ENCODE measurements at regions of chr1 and their contacts with region 1.

Region 1: DNA sequence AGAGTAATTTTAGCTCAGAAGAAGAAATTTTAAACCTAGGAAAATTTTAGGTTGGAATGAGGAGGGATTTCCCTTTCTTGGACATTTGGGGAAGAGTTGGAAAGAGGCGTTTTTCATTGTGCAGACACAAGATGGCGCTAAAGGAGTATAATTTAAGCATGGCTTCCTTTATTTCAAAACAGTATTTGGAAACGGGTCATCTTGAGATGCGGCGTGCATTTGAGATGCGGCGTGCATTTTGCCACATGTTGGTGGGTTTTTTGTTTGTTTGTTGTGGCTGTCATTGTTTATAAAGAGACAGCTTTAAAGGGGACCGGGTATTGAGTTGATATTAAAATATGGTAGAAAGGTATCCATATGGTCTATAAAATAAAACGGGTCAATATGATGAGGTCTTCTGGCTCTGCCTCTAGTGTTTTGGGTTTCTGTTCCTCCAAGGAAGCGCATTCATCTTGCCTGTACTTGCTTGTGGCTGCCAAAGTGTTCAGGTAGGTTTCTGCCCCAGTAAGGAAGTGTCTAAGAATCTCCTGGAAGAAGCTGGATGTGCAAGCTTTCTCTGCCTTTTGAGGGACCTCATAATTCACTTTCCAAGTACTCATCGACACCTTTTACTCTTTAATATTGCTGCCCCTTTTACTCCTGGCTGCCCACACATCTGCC is 210.3 kb downstream of the SLC35F3 start:
- DNase-seq: peak in 1 of 2 experiments; percentile 45
- H3K4me3 ChIP-seq: no peak overlapping the region
- H3K4me3 Mint-ChIP-seq: no peak overlapping the region
- H3K27ac Mint-ChIP-seq: no peak overlapping the region
- H3K4me1 ChIP-seq: no peaks in the 10 kb centered on the region
- H3K4me1 Mint-ChIP-seq: no peaks in the 10 kb centered on the region
- H3K27me3 ChIP-seq: no peaks in the 10 kb centered on the region; the same call in none of the 2 replicates
- H3K27me3 Mint-ChIP-seq: peaks cover 12% of the 10 kb centered on the region
- CTCF ChIP-seq: peak; percentile 60 to 66

Region 2: DNA sequence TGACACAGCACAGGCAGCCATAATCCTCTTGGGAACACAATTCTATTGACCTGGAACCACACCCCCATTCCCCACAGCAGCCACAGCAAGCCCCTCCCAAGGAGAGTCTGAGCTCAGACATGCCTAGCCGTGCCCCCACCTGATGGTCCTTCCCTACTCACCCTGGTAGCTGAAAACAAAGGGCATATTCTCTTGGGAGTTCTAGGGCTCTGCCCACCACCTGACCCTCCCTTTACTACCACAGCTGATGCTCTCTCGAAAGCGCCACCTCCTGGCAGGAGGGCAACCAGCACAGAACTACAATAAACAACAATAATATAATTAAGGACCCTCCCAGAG is 73.6 kb after region 1 on chr1:
- CTCF ChIA-PET with region 1: no interaction called
- POLR2A ChIA-PET with region 1: no interaction called
- intact Hi-C with region 1: loop called (anchors 1 kb)
- DNase-seq: no peak
- H3K4me3 ChIP-seq: no peak overlapping the region
- H3K4me3 Mint-ChIP-seq: no peak overlapping the region
- H3K27ac Mint-ChIP-seq: no peak overlapping the region
- H3K4me1 ChIP-seq: no peaks in the 10 kb centered on the region
- H3K4me1 Mint-ChIP-seq: no peaks in the 10 kb centered on the region
- H3K27me3 ChIP-seq: no peaks in the 10 kb centered on the region; the same call in 1 of the 2 replicates
- H3K27me3 Mint-ChIP-seq: peaks cover 21% of the 10 kb centered on the region
- CTCF ChIP-seq: peak in 1 of 2 experiments; percentile 18

Region 3: GRCh38 chr1:234309598-234310459 is 195.1 kb after region 1 on chr1:
- CTCF ChIA-PET with region 1: interaction called, 7 read pairs
- POLR2A ChIA-PET with region 1: no interaction called
- intact Hi-C with region 1: loop called (anchors 1 kb)
- DNase-seq: peak; percentile 70 to 72
- H3K4me3 ChIP-seq: peak overlapping the region; percentile 21
- H3K4me3 Mint-ChIP-seq: peak overlapping the region; percentile 72
- H3K27ac Mint-ChIP-seq: no peak overlapping the region
- H3K4me1 ChIP-seq: peaks cover 5% of the 10 kb centered on the region; the same call in 1 of the 2 replicates
- H3K4me1 Mint-ChIP-seq: no peaks in the 10 kb centered on the region
- H3K27me3 ChIP-seq: no peaks in the 10 kb centered on the region
- H3K27me3 Mint-ChIP-seq: peaks cover 10% of the 10 kb centered on the region
- CTCF ChIP-seq: peak; percentile 96 to 97

Region 4: GRCh38 chr1:234326497-234327366 is 212.0 kb after region 1 on chr1:
- CTCF ChIA-PET with region 1: no interaction called
- POLR2A ChIA-PET with region 1: no interaction called
- intact Hi-C with region 1: loop called (anchors 5 kb)
- DNase-seq: peak; percentile 59 to 66
- H3K4me3 ChIP-seq: no peak overlapping the region
- H3K4me3 Mint-ChIP-seq: no peak overlapping the region
- H3K27ac Mint-ChIP-seq: no peak overlapping the region
- H3K4me1 ChIP-seq: no peaks in the 10 kb centered on the region
- H3K4me1 Mint-ChIP-seq: no peaks in the 10 kb centered on the region
- H3K27me3 ChIP-seq: peaks cover 2% of the 10 kb centered on the region; the same call in 1 of the 2 replicates
- H3K27me3 Mint-ChIP-seq: peaks cover 29% of the 10 kb centered on the region
- CTCF ChIP-seq: peak; percentile 77 to 82

Region 5: GRCh38 chr1:234458352-234459017 is 343.7 kb after region 1 on chr1:
- CTCF ChIA-PET with region 1: no interaction called
- POLR2A ChIA-PET with region 1: no interaction called
- intact Hi-C with region 1: loop called (anchors 10 kb)
- DNase-seq: no peak
- H3K4me3 ChIP-seq: no peak overlapping the region
- H3K4me3 Mint-ChIP-seq: no peak overlapping the region
- H3K27ac Mint-ChIP-seq: no peak overlapping the region
- H3K4me1 ChIP-seq: no peaks in the 10 kb centered on the region
- H3K4me1 Mint-ChIP-seq: no peaks in the 10 kb centered on the region
- H3K27me3 ChIP-seq: no peaks in the 10 kb centered on the region
- H3K27me3 Mint-ChIP-seq: no peaks in the 10 kb centered on the region
- CTCF ChIP-seq: no peak